GM12878 (cell line): ENCODE measurements at regions of chr2 and their contacts with region 1.

Region 1: DNA sequence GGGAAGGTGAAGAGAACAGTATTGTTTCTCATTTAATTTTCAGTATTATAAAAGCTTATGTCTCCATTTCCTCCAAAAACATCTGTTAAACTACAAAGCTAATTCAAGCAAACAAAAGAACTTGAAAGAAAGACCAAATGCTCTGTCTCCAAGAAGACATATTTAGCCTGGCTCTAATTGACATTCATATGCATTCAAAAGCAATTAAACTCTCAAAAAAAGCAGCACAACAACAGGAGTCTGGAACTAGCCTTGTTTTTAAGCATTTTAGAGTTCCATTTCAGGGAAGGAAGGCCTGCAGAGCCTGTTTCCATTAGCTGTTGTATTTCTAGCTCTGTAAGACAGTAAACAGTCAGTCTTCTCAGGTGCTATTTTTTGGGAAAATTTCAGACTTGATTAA is 447.9 kb downstream of the TDRD15 start:
- DNase-seq: no peak
- ATAC-seq: no peak
- H3K4me3 ChIP-seq: no peak overlapping the region
- H3K27ac ChIP-seq: no peak overlapping the region
- H3K4me1 ChIP-seq: no peaks in the 10 kb centered on the region
- H3K27me3 ChIP-seq: no peaks in the 10 kb centered on the region
- CTCF ChIP-seq: no peak
- EP300 ChIP-seq: no peak
- POLR2A ChIP-seq: no peak
- RAD21 ChIP-seq: no peak

Region 2: DNA sequence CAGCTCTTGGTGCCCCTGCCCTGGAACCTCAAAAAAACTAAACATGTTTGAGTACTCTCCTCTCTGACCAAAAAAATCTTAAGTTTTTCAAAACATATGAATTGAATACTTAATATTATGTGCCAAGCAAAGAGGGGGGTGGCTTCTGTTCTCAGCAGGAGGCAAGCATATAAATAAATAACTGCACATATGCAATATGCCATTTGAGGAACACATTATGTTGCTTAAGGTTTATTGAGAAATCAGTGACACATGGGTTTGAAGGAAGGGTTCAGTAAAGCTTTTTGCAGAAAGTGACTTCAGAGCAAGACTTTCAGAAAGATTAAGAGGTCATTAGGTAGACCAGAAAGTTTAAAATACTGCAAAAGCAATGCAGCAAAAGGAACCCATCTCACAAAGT is 18.7 kb before region 1 on chr2:
- CTCF ChIA-PET with region 1: no interaction called
- POLR2A ChIA-PET with region 1: no interaction called
- RAD21 ChIA-PET with region 1: no interaction called
- SMC1A ChIA-PET with region 1: no interaction called
- in situ Hi-C with region 1: no loop called
- intact Hi-C with region 1: loop called (anchors 1 kb)
- DNase-seq: no peak
- ATAC-seq: no peak
- H3K4me3 ChIP-seq: no peak overlapping the region
- H3K27ac ChIP-seq: no peak overlapping the region
- H3K4me1 ChIP-seq: no peaks in the 10 kb centered on the region
- H3K27me3 ChIP-seq: no peaks in the 10 kb centered on the region
- CTCF ChIP-seq: no peak
- EP300 ChIP-seq: no peak
- POLR2A ChIP-seq: no peak
- RAD21 ChIP-seq: no peak

Region 3: DNA sequence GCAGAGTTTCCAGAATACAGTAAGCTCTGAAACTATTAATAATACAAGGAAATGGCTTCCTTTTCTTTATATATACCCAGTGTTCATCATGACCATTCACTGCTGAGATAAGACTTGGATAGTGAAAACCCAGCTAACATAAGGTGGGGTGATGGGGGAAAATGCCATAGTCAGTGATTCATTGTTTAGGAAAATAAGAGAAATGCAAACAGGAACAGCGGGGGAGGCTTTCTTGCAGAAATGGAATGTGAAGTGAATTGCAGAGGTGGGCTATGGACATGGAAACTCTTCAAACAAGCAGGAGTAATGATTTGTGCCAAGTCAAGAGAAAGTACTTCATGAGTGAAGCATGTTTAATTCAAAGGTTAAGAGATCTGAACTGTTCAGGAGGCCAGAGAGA is 71.5 kb after region 1 on chr2:
- CTCF ChIA-PET with region 1: no interaction called
- POLR2A ChIA-PET with region 1: no interaction called
- RAD21 ChIA-PET with region 1: no interaction called
- SMC1A ChIA-PET with region 1: no interaction called
- in situ Hi-C with region 1: no loop called
- intact Hi-C with region 1: no loop called
- DNase-seq: no peak
- ATAC-seq: no peak
- H3K4me3 ChIP-seq: no peak overlapping the region
- H3K27ac ChIP-seq: no peak overlapping the region
- H3K4me1 ChIP-seq: no peaks in the 10 kb centered on the region
- H3K27me3 ChIP-seq: no peaks in the 10 kb centered on the region
- CTCF ChIP-seq: no peak
- EP300 ChIP-seq: no peak
- POLR2A ChIP-seq: no peak
- RAD21 ChIP-seq: no peak

Region 4: GRCh38 chr2:21754164-21754788 is 182.6 kb after region 1 on chr2:
- CTCF ChIA-PET with region 1: no interaction called
- POLR2A ChIA-PET with region 1: no interaction called
- RAD21 ChIA-PET with region 1: no interaction called
- SMC1A ChIA-PET with region 1: no interaction called
- in situ Hi-C with region 1: no loop called
- intact Hi-C with region 1: no loop called
- DNase-seq: no peak
- ATAC-seq: peak; percentile 52; the same call in 1 of the 3 replicates
- H3K4me3 ChIP-seq: no peak overlapping the region
- H3K27ac ChIP-seq: no peak overlapping the region
- H3K4me1 ChIP-seq: no peaks in the 10 kb centered on the region
- H3K27me3 ChIP-seq: no peaks in the 10 kb centered on the region
- CTCF ChIP-seq: peak; percentile 27 to 57 (median 32); a peak in 4 of 6 replicates
- EP300 ChIP-seq: no peak
- POLR2A ChIP-seq: no peak
- RAD21 ChIP-seq: peak; percentile 39